Activated naive CD4-positive, alpha-beta T cell treated with anti-CD3 and anti-CD28 coated beads for 36 hours (primary cell): ENCODE measurements at regions of chr1 and their contacts with region 1.

Region 1: DNA sequence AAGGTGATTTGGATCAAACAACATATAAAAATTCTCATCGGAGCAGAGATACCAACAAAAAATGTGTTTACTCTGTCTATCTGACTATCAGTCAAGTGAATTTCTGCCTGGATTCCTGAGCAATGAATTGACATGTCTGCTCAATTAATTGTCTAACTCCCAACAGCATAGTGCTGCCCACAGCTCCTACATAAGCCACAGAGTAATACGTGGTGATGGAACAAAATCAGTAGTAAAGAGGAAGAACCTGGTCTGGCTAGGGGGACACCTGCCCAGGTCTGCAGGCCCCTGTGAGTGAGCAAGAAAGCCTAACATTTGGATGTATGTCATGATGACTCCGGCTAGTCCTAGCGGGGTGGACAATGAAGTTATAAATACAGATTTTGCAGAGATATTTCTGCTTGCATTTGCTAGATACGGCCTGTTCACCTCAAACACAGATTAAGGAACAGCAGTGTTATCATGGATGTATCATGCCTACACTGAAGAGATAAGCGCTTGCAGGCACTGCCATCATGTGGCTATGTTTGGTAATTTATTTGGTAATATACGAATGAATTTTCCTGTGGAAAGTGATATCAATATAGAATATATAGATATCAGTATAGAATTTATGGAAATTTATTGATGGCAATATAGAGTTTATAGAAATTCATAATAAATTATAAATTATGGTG is 69.6 kb upstream of the LRRC8B start:
- DNase-seq: peak; percentile 85
- H3K4me3 Mint-ChIP-seq: no peak overlapping the region
- H3K27ac Mint-ChIP-seq: no peak overlapping the region
- H3K4me1 Mint-ChIP-seq: peaks cover 18% of the 10 kb centered on the region
- H3K27me3 Mint-ChIP-seq: peaks cover 4% of the 10 kb centered on the region

Region 2: DNA sequence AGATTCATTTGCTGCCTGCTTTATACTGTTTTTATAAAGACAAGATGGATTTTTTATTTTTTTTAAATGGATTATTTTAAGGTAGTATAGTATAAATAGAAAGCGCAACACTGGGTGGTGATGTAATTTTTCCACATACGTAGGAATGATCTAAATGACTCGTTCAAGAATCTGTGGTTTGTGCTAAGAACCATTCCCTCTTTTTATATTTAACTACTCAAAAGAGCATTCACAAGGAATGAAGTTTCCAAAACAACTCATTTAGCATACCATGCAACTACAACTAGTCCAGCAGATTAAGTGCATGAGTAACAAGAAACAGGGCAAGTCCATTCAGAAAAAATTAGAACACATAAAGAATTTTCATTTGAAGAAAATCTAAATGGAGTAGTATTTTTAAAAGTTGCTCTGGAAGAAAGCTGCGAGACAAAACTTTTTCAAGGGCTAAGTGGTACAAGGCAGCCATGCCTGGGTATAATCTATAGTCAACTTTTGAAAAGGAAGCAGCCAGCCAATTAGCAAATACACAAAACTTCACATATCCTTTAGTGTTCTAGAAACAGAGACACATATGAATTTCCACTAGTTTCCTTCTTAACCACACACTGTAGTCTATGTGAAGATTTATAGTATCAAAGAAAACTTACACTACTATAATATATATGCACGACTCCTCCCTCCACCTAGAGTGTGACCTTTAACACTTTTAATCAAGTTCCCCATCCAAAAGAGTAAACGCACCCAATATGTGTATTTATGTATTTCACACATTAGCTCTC is 587.1 kb before region 1 on chr1:
- CTCF ChIA-PET with region 1: no interaction called
- intact Hi-C with region 1: loop called (anchors 1 kb)
- DNase-seq: no peak
- H3K4me3 Mint-ChIP-seq: no peak overlapping the region
- H3K27ac Mint-ChIP-seq: peak overlapping the region; percentile 84
- H3K4me1 Mint-ChIP-seq: peaks cover 57% of the 10 kb centered on the region
- H3K27me3 Mint-ChIP-seq: no peaks in the 10 kb centered on the region

Region 3: GRCh38 chr1:88998716-88999115 is 456.3 kb before region 1 on chr1:
- CTCF ChIA-PET with region 1: interaction called, 15 read pairs
- intact Hi-C with region 1: loop called (anchors 1 kb)
- DNase-seq: peak; percentile 33
- H3K4me3 Mint-ChIP-seq: no peak overlapping the region
- H3K27ac Mint-ChIP-seq: no peak overlapping the region
- H3K4me1 Mint-ChIP-seq: peaks cover 27% of the 10 kb centered on the region
- H3K27me3 Mint-ChIP-seq: peaks cover 4% of the 10 kb centered on the region

Region 4: GRCh38 chr1:89085781-89086180 is 369.2 kb before region 1 on chr1:
- CTCF ChIA-PET with region 1: interaction called, 14 read pairs
- intact Hi-C with region 1: loop called (anchors 1 kb)
- DNase-seq: peak; percentile 70
- H3K4me3 Mint-ChIP-seq: no peak overlapping the region
- H3K27ac Mint-ChIP-seq: no peak overlapping the region
- H3K4me1 Mint-ChIP-seq: no peaks in the 10 kb centered on the region
- H3K27me3 Mint-ChIP-seq: no peaks in the 10 kb centered on the region

Region 5: DNA sequence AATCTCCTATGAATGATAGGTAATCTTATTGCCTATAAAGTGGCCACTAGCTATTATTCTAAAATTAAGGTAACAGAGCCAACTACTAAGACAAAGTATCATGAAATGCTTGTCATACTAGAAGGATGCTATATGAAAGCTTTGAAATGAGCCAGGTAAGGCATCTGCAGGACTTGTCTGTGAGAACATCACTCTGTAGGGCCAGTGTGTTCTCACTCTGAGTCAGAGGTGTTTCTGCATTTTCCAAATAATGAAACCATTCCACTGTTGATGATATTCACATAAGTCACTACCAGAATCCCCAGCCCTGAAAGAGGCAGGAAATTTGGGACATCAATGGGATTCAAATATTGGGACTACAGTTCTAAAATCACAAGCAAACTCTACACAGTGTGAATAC is 156.5 kb before region 1 on chr1:
- CTCF ChIA-PET with region 1: no interaction called
- intact Hi-C with region 1: loop called (anchors 1 kb)
- DNase-seq: no peak
- H3K4me3 Mint-ChIP-seq: no peak overlapping the region
- H3K27ac Mint-ChIP-seq: no peak overlapping the region
- H3K4me1 Mint-ChIP-seq: peaks cover 55% of the 10 kb centered on the region
- H3K27me3 Mint-ChIP-seq: no peaks in the 10 kb centered on the region

Region 6: GRCh38 chr1:89322402-89322801 is 132.6 kb before region 1 on chr1:
- CTCF ChIA-PET with region 1: no interaction called
- intact Hi-C with region 1: no loop called
- DNase-seq: no peak
- H3K4me3 Mint-ChIP-seq: no peak overlapping the region
- H3K27ac Mint-ChIP-seq: no peak overlapping the region
- H3K4me1 Mint-ChIP-seq: peaks cover 5% of the 10 kb centered on the region
- H3K27me3 Mint-ChIP-seq: no peaks in the 10 kb centered on the region

Region 7: GRCh38 chr1:89615676-89616598 is 161.0 kb after region 1 on chr1:
- CTCF ChIA-PET with region 1: no interaction called
- intact Hi-C with region 1: loop called (anchors 1 kb)
- DNase-seq: no peak
- H3K4me3 Mint-ChIP-seq: no peak overlapping the region
- H3K27ac Mint-ChIP-seq: no peak overlapping the region
- H3K4me1 Mint-ChIP-seq: peaks cover 65% of the 10 kb centered on the region
- H3K27me3 Mint-ChIP-seq: no peaks in the 10 kb centered on the region

Region 8: GRCh38 chr1:89670163-89670562 is 215.2 kb after region 1 on chr1:
- CTCF ChIA-PET with region 1: no interaction called
- intact Hi-C with region 1: no loop called
- DNase-seq: no peak
- H3K4me3 Mint-ChIP-seq: peak overlapping the region; percentile 16
- H3K27ac Mint-ChIP-seq: peak overlapping the region; percentile 43
- H3K4me1 Mint-ChIP-seq: peaks cover 83% of the 10 kb centered on the region
- H3K27me3 Mint-ChIP-seq: no peaks in the 10 kb centered on the region

Region 9: GRCh38 chr1:89712420-89712819 is 257.4 kb after region 1 on chr1:
- CTCF ChIA-PET with region 1: no interaction called
- intact Hi-C with region 1: no loop called
- DNase-seq: no peak
- H3K4me3 Mint-ChIP-seq: no peak overlapping the region
- H3K27ac Mint-ChIP-seq: no peak overlapping the region
- H3K4me1 Mint-ChIP-seq: peaks cover 23% of the 10 kb centered on the region
- H3K27me3 Mint-ChIP-seq: no peaks in the 10 kb centered on the region